A673 (cell line): ENCODE measurements at regions of chr16 and their contacts with region 1.

Region 1: GRCh38 chr16:52439171-52439701 is 107.7 kb downstream of the TOX3 start:
- DNase-seq: no peak
- H3K4me3 ChIP-seq: no peak overlapping the region
- H3K27ac ChIP-seq: no peak overlapping the region
- H3K4me1 ChIP-seq: no peaks in the 10 kb centered on the region
- H3K27me3 ChIP-seq: no peaks in the 10 kb centered on the region
- CTCF ChIP-seq: no peak

Region 2: GRCh38 chr16:51337662-51338061 is 1101.6 kb before region 1 on chr16:
- CTCF ChIA-PET with region 1: no interaction called
- POLR2A ChIA-PET with region 1: no interaction called
- intact Hi-C with region 1: no loop called
- DNase-seq: peak; percentile 25
- H3K4me3 ChIP-seq: no peak overlapping the region
- H3K27ac ChIP-seq: no peak overlapping the region
- H3K4me1 ChIP-seq: no peaks in the 10 kb centered on the region
- H3K27me3 ChIP-seq: no peaks in the 10 kb centered on the region
- CTCF ChIP-seq: peak; percentile 33; the same call in 1 of the 2 replicates

Region 3: DNA sequence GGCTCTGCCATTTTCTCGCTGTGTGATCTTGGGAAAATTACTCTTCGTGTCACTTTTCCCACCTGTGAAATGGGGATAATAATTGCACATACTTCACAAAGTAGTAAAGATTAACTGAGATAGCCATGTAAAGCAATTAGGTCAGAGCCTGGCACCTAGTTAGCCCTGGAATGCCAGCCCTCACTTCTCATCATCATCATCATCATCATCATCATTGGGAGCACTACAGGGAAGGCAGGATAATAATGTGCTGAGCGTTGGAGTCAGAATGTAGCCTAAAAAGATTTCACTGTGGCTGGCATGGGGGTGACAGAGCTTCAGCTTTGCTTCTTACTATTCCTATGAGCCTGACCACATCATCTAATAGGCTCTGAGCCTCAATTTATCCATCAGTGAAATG is 254.9 kb before region 1 on chr16:
- CTCF ChIA-PET with region 1: no interaction called
- POLR2A ChIA-PET with region 1: no interaction called
- intact Hi-C with region 1: loop called (anchors 10 kb)
- DNase-seq: no peak
- H3K4me3 ChIP-seq: no peak overlapping the region
- H3K27ac ChIP-seq: no peak overlapping the region
- H3K4me1 ChIP-seq: no peaks in the 10 kb centered on the region
- H3K27me3 ChIP-seq: peaks cover 13% of the 10 kb centered on the region
- CTCF ChIP-seq: no peak

Region 4: GRCh38 chr16:52227851-52228250 is 211.4 kb before region 1 on chr16:
- CTCF ChIA-PET with region 1: no interaction called
- POLR2A ChIA-PET with region 1: no interaction called
- intact Hi-C with region 1: no loop called
- DNase-seq: no peak
- H3K4me3 ChIP-seq: no peak overlapping the region
- H3K27ac ChIP-seq: no peak overlapping the region
- H3K4me1 ChIP-seq: no peaks in the 10 kb centered on the region
- H3K27me3 ChIP-seq: no peaks in the 10 kb centered on the region
- CTCF ChIP-seq: no peak

Region 5: DNA sequence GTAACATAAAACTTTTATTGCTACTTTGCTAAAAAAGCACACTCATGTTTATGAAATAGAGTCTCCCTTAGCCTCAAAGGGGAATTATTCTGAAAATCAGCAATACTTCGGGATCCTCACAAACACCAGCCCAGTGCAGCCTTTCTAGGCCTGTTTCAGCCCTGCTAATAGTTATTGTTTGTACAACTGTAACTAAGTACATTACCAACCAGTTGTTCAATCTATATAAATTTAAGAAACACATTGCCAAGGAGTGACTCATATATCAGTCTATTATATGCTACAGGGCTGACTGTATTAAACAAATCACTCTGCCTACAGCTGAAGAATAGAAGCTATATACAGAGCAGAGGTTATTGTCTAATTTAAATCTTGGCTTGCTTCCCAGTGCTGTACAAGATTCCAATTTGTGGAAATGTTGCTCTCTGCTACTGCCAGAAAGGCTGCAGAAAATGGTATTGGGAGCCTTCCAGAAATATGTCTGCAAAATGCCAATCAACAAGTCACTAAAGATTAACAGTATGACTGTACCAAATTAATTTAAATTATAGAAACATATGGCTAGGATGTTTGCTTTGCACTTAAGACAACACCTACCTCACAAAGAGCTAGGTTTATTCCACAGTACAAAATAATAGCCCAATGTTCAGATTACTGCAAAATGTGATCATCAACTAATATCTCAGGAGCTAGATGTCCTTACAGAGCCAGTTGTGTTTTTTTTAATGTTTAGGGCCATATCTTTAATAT is 58.0 kb after region 1 on chr16:
- CTCF ChIA-PET with region 1: no interaction called
- POLR2A ChIA-PET with region 1: interaction called, 14 read pairs
- intact Hi-C with region 1: no loop called
- DNase-seq: peak; percentile 94
- H3K4me3 ChIP-seq: no peak overlapping the region
- H3K27ac ChIP-seq: peak overlapping the region; percentile 78
- H3K4me1 ChIP-seq: peaks cover 61% of the 10 kb centered on the region
- H3K27me3 ChIP-seq: peaks cover 3% of the 10 kb centered on the region
- CTCF ChIP-seq: no peak

Region 6: GRCh38 chr16:52573365-52574299 is 134.4 kb after region 1 on chr16:
- CTCF ChIA-PET with region 1: no interaction called
- POLR2A ChIA-PET with region 1: no interaction called
- intact Hi-C with region 1: no loop called
- DNase-seq: no peak
- H3K4me3 ChIP-seq: no peak overlapping the region
- H3K27ac ChIP-seq: no peak overlapping the region
- H3K4me1 ChIP-seq: no peaks in the 10 kb centered on the region
- H3K27me3 ChIP-seq: peaks cover 4% of the 10 kb centered on the region
- CTCF ChIP-seq: no peak